ENCODE measurements at regions of chr12 and their contacts with region 1.

Region 1: GRCh38 chr12:57058454-57058853 is 8.5 kb upstream of the MYO1A start:
- DNase-seq: no peak
- H3K4me3 ChIP-seq: no peak overlapping the region
- H3K27ac ChIP-seq: peak overlapping the region in 4 of 8 donors; percentile 61 to 75 (median 67)
- H3K4me1 ChIP-seq: peaks cover 0 to 62% (median 26%) of the 10 kb centered on the region in 6 donors
- H3K27me3 ChIP-seq: no peaks in the 10 kb centered on the region
- CTCF ChIP-seq: no peak
- POLR2A ChIP-seq: no peak

Region 2: GRCh38 chr12:57016318-57016717 is 42.1 kb before region 1 on chr12 and contains the start of gene TAC3:
- intact Hi-C with region 1: loop called (anchors 5 kb)
- DNase-seq: no peak
- H3K4me3 ChIP-seq: no peak within 1 kb of the TSS
- H3K27ac ChIP-seq: no peak within 1 kb of the TSS
- H3K4me1 ChIP-seq: peaks cover 0 to 17% (median under 1%) of the 10 kb centered on the region in 6 donors
- H3K27me3 ChIP-seq: peaks cover 0 to 13% (median 0%) of the 10 kb centered on the region in 7 donors
- CTCF ChIP-seq: no peak
- POLR2A ChIP-seq: no peak
- total RNA-seq, gene TAC3: not detected

Region 3: DNA sequence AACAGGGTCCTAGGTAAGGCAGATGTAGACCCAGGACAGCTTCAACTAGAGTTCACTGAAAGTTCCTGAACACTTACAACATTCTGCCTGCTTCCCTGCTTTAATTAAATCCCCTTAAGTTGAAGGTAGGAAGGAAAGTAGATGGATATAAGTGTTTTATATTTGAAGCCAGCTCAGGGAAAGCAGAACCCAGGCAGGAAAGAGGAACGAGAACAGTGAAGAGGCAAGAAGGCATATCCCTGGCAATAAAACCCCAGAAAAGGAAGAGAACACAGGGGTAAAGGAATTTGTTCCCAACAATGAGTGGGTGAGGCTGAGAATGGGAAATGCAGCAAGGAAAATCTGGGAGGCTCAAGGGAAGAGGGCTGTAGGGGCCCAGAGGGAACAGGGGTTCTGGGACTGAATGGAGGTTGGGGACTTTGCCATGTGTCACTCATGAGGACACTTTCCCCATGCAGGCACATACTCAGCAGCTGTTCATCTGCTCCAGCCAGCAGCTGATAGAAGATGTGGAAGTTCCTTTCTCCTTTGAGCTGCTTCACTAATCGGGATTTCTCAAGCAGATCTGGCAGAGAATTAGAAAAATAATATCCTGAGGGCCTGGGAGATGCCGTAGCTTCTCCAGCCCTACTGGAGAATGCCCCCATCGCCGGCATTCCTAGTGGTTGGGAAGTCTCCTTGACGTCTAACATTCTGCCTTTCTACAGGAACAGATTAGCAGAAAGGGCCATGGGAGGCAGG is 12.2 kb before region 1 on chr12:
- intact Hi-C with region 1: no loop called
- DNase-seq: no peak
- H3K4me3 ChIP-seq: no peak overlapping the region
- H3K27ac ChIP-seq: peak overlapping the region in 2 of 8 donors; percentile 70 to 80
- H3K4me1 ChIP-seq: peaks cover 0 to 41% (median 28%) of the 10 kb centered on the region in 6 donors
- H3K27me3 ChIP-seq: no peaks in the 10 kb centered on the region
- CTCF ChIP-seq: no peak
- POLR2A ChIP-seq: no peak